Activated CD4-positive, alpha-beta T cell treated with anti-CD3 and anti-CD28 coated beads for 36 hours (primary cell): ENCODE measurements at regions of chr2 and their contacts with region 1.

Region 1: GRCh38 chr2:8408560-8409460 is 273.0 kb upstream of the ID2 start:
- DNase-seq: peak; percentile 88
- ATAC-seq: peak; percentile 97
- H3K4me3 Mint-ChIP-seq: peak overlapping the region; percentile 28
- H3K27ac Mint-ChIP-seq: peak overlapping the region; percentile 84
- H3K4me1 Mint-ChIP-seq: peaks cover 33% of the 10 kb centered on the region
- H3K27me3 Mint-ChIP-seq: peaks cover 10% of the 10 kb centered on the region

Region 2: GRCh38 chr2:7427293-7428060 is 981.3 kb before region 1 on chr2:
- CTCF ChIA-PET with region 1: no interaction called
- POLR2A ChIA-PET with region 1: no interaction called
- intact Hi-C with region 1: loop called in 1 of 2 experiments (anchors 10 kb)
- DNase-seq: no peak
- ATAC-seq: no peak
- H3K4me3 Mint-ChIP-seq: no peak overlapping the region
- H3K27ac Mint-ChIP-seq: peak overlapping the region; percentile 51
- H3K4me1 Mint-ChIP-seq: peaks cover 41% of the 10 kb centered on the region
- H3K27me3 Mint-ChIP-seq: peaks cover 9% of the 10 kb centered on the region

Region 3: GRCh38 chr2:7825591-7826312 is 583.1 kb before region 1 on chr2:
- CTCF ChIA-PET with region 1: no interaction called
- POLR2A ChIA-PET with region 1: interaction called, 3 read pairs
- intact Hi-C with region 1: loop called (anchors 1 to 2 kb)
- DNase-seq: peak; percentile 86
- ATAC-seq: peak; percentile 95
- H3K4me3 Mint-ChIP-seq: peak overlapping the region; percentile 26
- H3K27ac Mint-ChIP-seq: peak overlapping the region; percentile 93
- H3K4me1 Mint-ChIP-seq: peaks cover 27% of the 10 kb centered on the region
- H3K27me3 Mint-ChIP-seq: peaks cover 3% of the 10 kb centered on the region

Region 4: DNA sequence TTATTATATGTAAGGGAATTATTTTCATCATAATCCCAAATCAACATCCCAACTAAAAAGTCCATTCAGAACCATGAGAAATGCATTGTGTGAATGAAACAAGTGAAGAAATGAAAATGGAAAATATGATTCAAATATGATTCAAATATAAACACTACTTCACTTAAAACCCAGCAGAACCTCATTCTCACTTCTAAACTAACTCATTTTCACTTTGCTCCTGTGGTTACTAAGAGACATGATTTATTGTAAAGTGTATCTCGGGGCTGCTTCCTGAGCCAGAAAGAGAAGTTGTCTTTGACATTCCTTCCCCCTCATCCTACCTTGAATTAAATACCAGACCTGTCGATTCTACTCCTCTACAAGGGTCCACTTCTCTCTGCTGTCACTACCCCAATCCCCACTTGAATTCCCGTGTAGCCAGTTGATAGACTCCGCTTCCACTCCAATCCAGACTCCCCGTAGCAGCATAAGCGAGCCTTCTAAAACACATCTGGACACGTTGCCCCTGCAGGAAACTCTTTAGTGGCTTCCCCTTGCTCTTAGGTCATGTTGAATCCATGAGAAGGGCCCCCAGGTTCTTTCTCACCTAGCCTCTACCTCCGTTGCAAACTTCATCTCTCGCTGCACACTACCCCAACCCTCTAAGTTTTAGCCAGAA is 424.0 kb before region 1 on chr2:
- CTCF ChIA-PET with region 1: no interaction called
- POLR2A ChIA-PET with region 1: no interaction called
- intact Hi-C with region 1: loop called in 1 of 2 experiments (anchors 5 kb)
- DNase-seq: no peak
- ATAC-seq: peak; percentile 96
- H3K4me3 Mint-ChIP-seq: peak overlapping the region; percentile 44
- H3K27ac Mint-ChIP-seq: peak overlapping the region; percentile 95
- H3K4me1 Mint-ChIP-seq: peaks cover 33% of the 10 kb centered on the region
- H3K27me3 Mint-ChIP-seq: no peaks in the 10 kb centered on the region

Region 5: DNA sequence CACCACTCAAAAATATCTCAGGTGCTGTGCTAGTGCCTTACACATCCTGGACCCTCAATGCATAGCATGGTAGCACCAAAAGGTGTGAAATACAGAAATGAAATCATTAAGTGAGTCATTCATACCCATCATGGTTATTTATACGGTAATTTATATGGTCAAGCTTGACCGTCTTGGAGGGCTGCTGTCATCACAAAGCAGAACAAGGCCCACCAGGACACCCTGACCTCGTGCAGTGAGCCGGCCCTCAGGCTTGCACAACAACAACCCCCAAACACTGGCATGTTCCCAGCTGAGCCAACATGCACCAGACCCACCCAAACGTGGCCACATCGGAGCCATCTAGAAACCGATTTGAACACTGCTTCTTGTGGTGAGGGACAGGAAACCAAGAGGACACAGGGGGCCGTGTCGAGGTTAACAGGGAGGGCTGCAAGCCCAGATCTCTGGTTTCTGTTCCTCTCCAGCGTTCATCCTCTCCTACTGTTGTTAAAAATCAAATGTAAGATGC is 105.4 kb before region 1 on chr2:
- CTCF ChIA-PET with region 1: no interaction called
- POLR2A ChIA-PET with region 1: no interaction called
- intact Hi-C with region 1: loop called in 1 of 2 experiments (anchors 1 kb)
- DNase-seq: peak; percentile 53
- ATAC-seq: peak; percentile 7
- H3K4me3 Mint-ChIP-seq: no peak overlapping the region
- H3K27ac Mint-ChIP-seq: peak overlapping the region; percentile 63
- H3K4me1 Mint-ChIP-seq: peaks cover 51% of the 10 kb centered on the region
- H3K27me3 Mint-ChIP-seq: peaks cover 5% of the 10 kb centered on the region

Region 6: DNA sequence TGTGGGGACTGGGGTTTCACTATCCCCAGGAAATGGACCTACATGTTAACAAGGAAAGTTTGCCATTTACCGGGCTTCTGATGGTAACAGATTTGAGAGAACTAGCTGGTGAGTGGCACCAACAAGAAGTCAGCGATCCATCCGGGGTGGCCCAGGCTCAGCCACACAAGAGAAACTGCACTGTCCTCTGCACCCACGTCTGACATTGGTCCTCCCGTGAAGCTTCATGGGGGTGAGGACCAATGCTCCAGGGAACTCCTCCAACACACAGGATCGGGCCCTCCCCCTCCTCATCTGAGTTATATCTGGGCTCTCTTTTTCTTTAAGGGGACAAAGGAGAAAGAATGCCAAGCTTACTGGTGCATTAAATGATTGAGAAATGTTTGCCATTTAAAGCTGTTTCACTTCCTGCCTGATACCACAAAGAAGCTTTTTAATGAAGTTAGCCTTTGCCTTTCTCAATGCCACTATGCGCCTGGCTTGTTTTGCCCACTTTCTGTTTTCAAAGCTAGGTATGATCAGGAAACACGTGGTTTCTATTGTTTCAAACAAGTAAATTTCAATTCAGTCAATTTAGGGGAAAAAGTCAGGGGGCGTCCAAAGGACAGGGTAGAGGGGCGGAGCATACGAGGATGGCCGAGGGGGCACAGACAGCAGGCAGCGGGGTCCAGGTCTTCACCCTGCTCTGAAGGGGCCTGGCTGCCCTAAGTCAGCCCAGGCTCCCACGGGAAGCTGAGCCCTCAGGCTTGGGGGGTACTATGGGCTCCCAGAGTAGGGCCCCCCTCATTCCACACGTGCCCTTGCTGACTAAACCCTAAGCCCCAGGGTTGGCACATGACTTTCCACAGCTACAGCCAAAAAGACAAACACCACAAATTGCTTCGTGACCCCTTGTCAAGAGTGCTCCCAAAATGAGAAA is 69.0 kb after region 1 on chr2:
- CTCF ChIA-PET with region 1: no interaction called
- POLR2A ChIA-PET with region 1: interaction called, 3 read pairs
- intact Hi-C with region 1: loop called in 1 of 2 experiments (anchors 2 kb)
- DNase-seq: peak; percentile 45
- ATAC-seq: no peak
- H3K4me3 Mint-ChIP-seq: peak overlapping the region; percentile 49
- H3K27ac Mint-ChIP-seq: peak overlapping the region; percentile 89
- H3K4me1 Mint-ChIP-seq: peaks cover 77% of the 10 kb centered on the region
- H3K27me3 Mint-ChIP-seq: no peaks in the 10 kb centered on the region

Region 7: DNA sequence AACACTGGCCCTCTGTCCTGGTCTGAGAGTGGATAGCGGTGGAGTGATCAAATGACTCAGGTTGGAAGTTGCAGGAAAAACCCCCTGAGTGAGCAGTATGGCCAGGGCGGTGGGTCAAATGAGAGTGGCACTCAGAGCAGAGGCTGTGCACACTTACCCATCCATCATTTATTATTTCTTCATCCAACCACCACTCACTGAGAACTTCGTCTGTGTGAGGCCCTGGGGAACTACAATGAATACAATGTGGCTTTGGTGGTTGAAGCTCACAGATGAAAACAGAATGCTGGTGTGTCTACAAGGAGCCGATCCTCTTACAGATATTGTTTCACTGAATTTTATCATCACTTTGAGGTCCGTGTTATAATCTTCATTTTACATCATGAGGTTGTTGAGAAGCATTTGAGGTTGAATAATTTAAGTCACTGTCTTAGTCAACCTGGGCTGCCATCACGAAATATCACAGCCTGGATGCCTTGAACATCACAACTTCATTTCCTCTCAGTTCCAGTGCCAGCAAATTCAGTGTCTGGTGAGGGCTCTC is 199.7 kb after region 1 on chr2:
- CTCF ChIA-PET with region 1: no interaction called
- POLR2A ChIA-PET with region 1: interaction called, 3 read pairs
- intact Hi-C with region 1: loop called (anchors 1 kb)
- DNase-seq: peak; percentile 67
- ATAC-seq: peak; percentile 90
- H3K4me3 Mint-ChIP-seq: no peak overlapping the region
- H3K27ac Mint-ChIP-seq: peak overlapping the region; percentile 73
- H3K4me1 Mint-ChIP-seq: peaks cover 32% of the 10 kb centered on the region
- H3K27me3 Mint-ChIP-seq: peaks cover 2% of the 10 kb centered on the region